Heart right ventricle (tissue), 16 donors: ENCODE measurements at regions of chr3 and their contacts with region 1.

Region 1: GRCh38 chr3:192652727-192653126 is 74.6 kb downstream of the FGF12 start:
- DNase-seq: no peak
- ATAC-seq: no peak
- H3K4me3 ChIP-seq: no peak overlapping the region
- H3K27ac ChIP-seq: peak overlapping the region in 9 of 10 donors; percentile 32 to 74 (median 63)
- H3K4me1 ChIP-seq: peaks cover 0 to 14% (median 6%) of the 10 kb centered on the region in 9 donors
- H3K27me3 ChIP-seq: no peaks in the 10 kb centered on the region
- CTCF ChIP-seq: no peak

Region 2: DNA sequence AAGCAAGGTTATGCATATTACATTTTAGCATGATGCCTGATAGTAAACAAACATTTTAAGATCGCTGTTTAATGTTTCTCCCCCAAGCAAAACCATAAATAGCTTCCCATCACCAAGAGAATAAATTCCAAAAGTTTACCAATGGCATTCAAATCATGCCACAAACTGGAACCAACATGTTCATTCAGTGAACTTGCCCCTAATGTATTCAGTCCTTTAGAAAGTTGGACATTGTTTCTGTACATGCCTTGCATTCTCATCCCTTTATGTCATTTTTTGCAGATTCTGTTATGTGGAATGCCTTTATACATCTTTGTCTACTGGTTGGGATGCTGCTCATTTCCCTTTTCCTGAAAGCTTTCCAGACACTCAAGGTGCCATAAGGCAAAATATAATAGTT is 1086.3 kb before region 1 on chr3:
- intact Hi-C with region 1: no loop called
- DNase-seq: no peak
- ATAC-seq: no peak
- H3K4me3 ChIP-seq: no peak overlapping the region
- H3K27ac ChIP-seq: no peak overlapping the region
- H3K4me1 ChIP-seq: no peaks in the 10 kb centered on the region
- H3K27me3 ChIP-seq: no peaks in the 10 kb centered on the region
- CTCF ChIP-seq: no peak

Region 3: GRCh38 chr3:191783039-191783438 is 869.7 kb before region 1 on chr3:
- intact Hi-C with region 1: no loop called
- DNase-seq: no peak
- ATAC-seq: no peak
- H3K4me3 ChIP-seq: no peak overlapping the region
- H3K27ac ChIP-seq: no peak overlapping the region
- H3K4me1 ChIP-seq: no peaks in the 10 kb centered on the region
- H3K27me3 ChIP-seq: no peaks in the 10 kb centered on the region
- CTCF ChIP-seq: no peak

Region 4: GRCh38 chr3:192494174-192494573 is 158.6 kb before region 1 on chr3:
- intact Hi-C with region 1: no loop called
- DNase-seq: peak in 1 of 2 donors; percentile 27
- ATAC-seq: peak; percentile 57 to 91 (median 76)
- H3K4me3 ChIP-seq: no peak overlapping the region
- H3K27ac ChIP-seq: peak overlapping the region in 9 of 10 donors; percentile 3 to 68 (median 41)
- H3K4me1 ChIP-seq: peaks cover 0 to 38% (median 13%) of the 10 kb centered on the region in 9 donors
- H3K27me3 ChIP-seq: no peaks in the 10 kb centered on the region
- CTCF ChIP-seq: no peak

Region 5: DNA sequence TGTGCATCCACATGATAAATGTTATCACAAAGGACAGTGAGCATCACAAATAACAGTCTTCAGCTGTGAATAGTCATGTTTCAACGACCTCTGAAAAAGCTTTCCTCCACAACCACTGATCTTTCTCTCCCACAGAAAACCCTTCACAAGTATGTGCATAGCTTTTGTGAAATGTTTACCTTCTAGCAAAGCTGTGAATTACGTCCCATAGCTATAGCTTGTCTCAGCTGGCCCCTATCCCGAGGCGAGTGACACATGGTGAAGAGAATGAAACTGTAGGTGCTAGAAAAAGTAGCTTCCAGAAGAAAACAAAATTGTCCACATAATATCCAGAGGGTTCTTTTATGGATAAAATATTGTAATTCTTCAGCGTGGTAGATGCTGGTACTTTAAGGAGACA is 107.4 kb before region 1 on chr3:
- intact Hi-C with region 1: no loop called
- DNase-seq: no peak
- ATAC-seq: no peak
- H3K4me3 ChIP-seq: no peak overlapping the region
- H3K27ac ChIP-seq: no peak overlapping the region
- H3K4me1 ChIP-seq: peaks cover 0 to 21% (median 14%) of the 10 kb centered on the region in 9 donors
- H3K27me3 ChIP-seq: no peaks in the 10 kb centered on the region
- CTCF ChIP-seq: no peak

Region 6: GRCh38 chr3:192577271-192577670 is 75.5 kb before region 1 on chr3:
- intact Hi-C with region 1: loop called in 1 of 10 experiments (anchors 5 kb)
- DNase-seq: no peak
- ATAC-seq: peak in 6 of 8 donors; percentile 29 to 91 (median 51)
- H3K4me3 ChIP-seq: no peak overlapping the region
- H3K27ac ChIP-seq: peak overlapping the region in 6 of 10 donors; percentile 9 to 51 (median 40)
- H3K4me1 ChIP-seq: peaks cover 0 to 4% (median 0%) of the 10 kb centered on the region in 9 donors
- H3K27me3 ChIP-seq: no peaks in the 10 kb centered on the region
- CTCF ChIP-seq: no peak

Region 7: GRCh38 chr3:192706272-192706671 is 53.5 kb after region 1 on chr3:
- intact Hi-C with region 1: loop called in 1 of 10 experiments (anchors 10 kb)
- DNase-seq: peak; percentile 55 to 62
- ATAC-seq: peak; percentile 72 to 97 (median 89)
- H3K4me3 ChIP-seq: no peak overlapping the region
- H3K27ac ChIP-seq: peak overlapping the region; percentile 17 to 77 (median 71)
- H3K4me1 ChIP-seq: peaks cover 0 to 6% (median 0%) of the 10 kb centered on the region in 9 donors
- H3K27me3 ChIP-seq: no peaks in the 10 kb centered on the region
- CTCF ChIP-seq: no peak

Region 8: GRCh38 chr3:192772240-192772894 is 119.6 kb after region 1 on chr3:
- intact Hi-C with region 1: loop called in 2 of 10 experiments (anchors 5 to 10 kb)
- DNase-seq: peak; percentile 42 to 44
- ATAC-seq: peak in 7 of 8 donors; percentile 67 to 94 (median 84)
- H3K4me3 ChIP-seq: no peak overlapping the region
- H3K27ac ChIP-seq: no peak overlapping the region
- H3K4me1 ChIP-seq: no peaks in the 10 kb centered on the region
- H3K27me3 ChIP-seq: no peaks in the 10 kb centered on the region
- CTCF ChIP-seq: peak; percentile 20 to 69 (median 56)